ENCODE measurements at regions of chr11 and their contacts with region 1.

Region 1: GRCh38 chr11:59783632-59784090 is 26.9 kb downstream of the MRPL16 start:
- DNase-seq: no peak
- ATAC-seq: no peak
- H3K4me3 ChIP-seq: no peak overlapping the region
- H3K4me3 Mint-ChIP-seq: peak overlapping the region in 1 of 10 donors; percentile 18
- H3K27ac ChIP-seq: no peak overlapping the region
- H3K27ac Mint-ChIP-seq: peak overlapping the region in 1 of 9 donors; percentile 69
- H3K4me1 ChIP-seq: peaks cover 0 to 14% of the 10 kb centered on the region in 2 donors
- H3K4me1 Mint-ChIP-seq: peaks cover 0 to 69% (median 5%) of the 10 kb centered on the region in 7 donors
- H3K27me3 ChIP-seq: no peaks in the 10 kb centered on the region
- H3K27me3 Mint-ChIP-seq: no peaks in the 10 kb centered on the region

Region 2: DNA sequence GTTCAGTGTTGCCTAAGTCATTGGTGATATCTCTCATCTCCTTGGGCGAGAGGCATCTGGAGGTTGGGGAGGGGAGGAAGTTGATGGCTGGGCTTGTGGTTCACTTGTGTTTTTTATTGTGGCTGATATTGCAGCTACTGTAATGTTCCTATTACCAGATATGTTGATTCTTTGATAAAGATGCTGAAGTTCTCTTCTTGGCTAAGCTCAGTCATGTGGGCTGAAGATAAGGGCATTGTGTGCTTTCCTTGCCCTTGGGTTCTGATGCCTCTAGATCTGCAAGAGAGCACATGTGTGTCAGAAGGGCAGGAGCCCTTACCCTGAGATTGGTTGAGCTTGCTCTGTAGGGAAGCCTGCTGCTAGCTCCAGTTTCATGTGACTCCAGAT is 16.4 kb before region 1 on chr11:
- CTCF ChIA-PET with region 1: no interaction called
- POLR2A ChIA-PET with region 1: no interaction called
- intact Hi-C with region 1: loop called in 1 of 2 experiments (anchors 2 kb)
- DNase-seq: peak in 6 of 9 donors; percentile 10 to 55 (median 40)
- ATAC-seq: peak; percentile 80
- H3K4me3 ChIP-seq: peak overlapping the region; percentile 32
- H3K4me3 Mint-ChIP-seq: peak overlapping the region in 5 of 10 donors; percentile 27 to 67 (median 58)
- H3K27ac ChIP-seq: no peak overlapping the region
- H3K27ac Mint-ChIP-seq: peak overlapping the region in 3 of 9 donors; percentile 24 to 81 (median 49)
- H3K4me1 ChIP-seq: peaks cover 31 to 45% of the 10 kb centered on the region in 2 donors
- H3K4me1 Mint-ChIP-seq: peaks cover 7 to 33% (median 27%) of the 10 kb centered on the region in 7 donors
- H3K27me3 ChIP-seq: no peaks in the 10 kb centered on the region
- H3K27me3 Mint-ChIP-seq: peaks cover 0 to 4% (median 0%) of the 10 kb centered on the region in 5 donors